ENCODE measurements at regions of chr22 and their contacts with region 1.

Region 1: GRCh38 chr22:37817705-37818408 is 5.3 kb upstream of the GALR3 start:
- DNase-seq: peak; percentile 82
- H3K4me3 ChIP-seq: peak overlapping the region; percentile 64
- H3K27ac ChIP-seq: peak overlapping the region; percentile 72
- H3K4me1 ChIP-seq: peaks cover 20% of the 10 kb centered on the region
- H3K27me3 ChIP-seq: peaks cover 34% of the 10 kb centered on the region
- CTCF ChIP-seq: peak; percentile 97

Region 2: DNA sequence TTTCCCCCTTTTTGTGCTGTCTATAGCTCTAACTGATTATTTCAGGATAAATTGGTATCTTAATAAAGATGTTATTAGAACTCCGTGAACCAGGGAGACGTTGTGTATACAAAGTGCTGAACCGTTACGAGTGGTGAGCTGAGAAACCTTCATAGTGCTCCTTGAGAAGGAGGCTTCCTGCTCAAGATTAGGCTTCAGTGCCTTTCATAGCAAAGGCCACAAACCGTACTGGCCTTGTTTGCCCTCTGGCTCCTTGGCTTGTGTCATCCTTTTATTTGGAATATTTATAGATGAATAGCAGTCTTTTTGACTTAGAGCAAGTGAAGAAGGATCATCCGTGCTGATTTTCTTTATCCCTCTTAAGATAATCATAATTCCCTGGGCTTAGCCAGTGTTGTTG is 47.7 kb after region 1 on chr22:
- intact Hi-C with region 1: loop called (anchors 5 kb)
- DNase-seq: no peak
- H3K4me3 ChIP-seq: no peak overlapping the region
- H3K27ac ChIP-seq: no peak overlapping the region
- H3K4me1 ChIP-seq: peaks cover 27% of the 10 kb centered on the region
- H3K27me3 ChIP-seq: no peaks in the 10 kb centered on the region
- CTCF ChIP-seq: no peak

Region 3: DNA sequence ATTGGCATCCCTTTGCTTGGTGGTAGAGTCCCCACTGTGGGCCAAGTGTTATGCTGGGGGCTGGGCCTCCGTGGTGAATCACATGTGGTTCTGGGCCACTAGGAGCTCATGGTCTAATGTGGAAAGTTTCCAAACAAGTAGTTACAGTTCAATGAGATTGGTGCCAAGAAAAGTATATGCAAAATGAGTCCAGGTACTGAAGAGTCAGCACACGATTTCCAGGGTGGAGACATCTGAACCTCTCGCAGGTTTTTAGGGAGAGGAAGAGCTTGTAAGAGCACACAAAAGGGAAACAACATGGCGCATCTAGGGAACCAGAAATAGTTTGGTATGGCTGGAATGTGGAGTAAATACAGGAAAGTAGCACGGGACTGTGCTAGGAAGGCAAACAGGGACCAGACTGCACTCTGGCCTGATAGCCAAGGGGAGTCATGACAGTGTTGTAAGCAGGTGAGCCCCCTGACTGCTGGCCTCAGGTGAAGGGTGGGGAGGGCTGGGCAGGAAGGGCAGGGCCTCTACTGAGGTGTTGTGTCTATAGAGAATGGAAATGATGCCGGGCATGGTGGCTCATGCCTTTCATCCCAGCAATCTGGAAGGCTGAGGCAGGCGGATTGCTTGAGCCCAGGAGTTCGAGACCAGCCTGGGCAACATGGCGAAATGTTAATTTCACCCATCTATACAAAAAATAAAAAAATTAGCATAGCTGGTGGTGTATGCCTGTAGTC is 148.2 kb after region 1 on chr22:
- intact Hi-C with region 1: loop called (anchors 10 kb)
- DNase-seq: no peak
- H3K4me3 ChIP-seq: no peak overlapping the region
- H3K27ac ChIP-seq: peak overlapping the region; percentile 43
- H3K4me1 ChIP-seq: peaks cover 23% of the 10 kb centered on the region
- H3K27me3 ChIP-seq: no peaks in the 10 kb centered on the region
- CTCF ChIP-seq: no peak